B cell (primary cell): ENCODE measurements at regions of chr20 and their contacts with region 1.

Region 1: DNA sequence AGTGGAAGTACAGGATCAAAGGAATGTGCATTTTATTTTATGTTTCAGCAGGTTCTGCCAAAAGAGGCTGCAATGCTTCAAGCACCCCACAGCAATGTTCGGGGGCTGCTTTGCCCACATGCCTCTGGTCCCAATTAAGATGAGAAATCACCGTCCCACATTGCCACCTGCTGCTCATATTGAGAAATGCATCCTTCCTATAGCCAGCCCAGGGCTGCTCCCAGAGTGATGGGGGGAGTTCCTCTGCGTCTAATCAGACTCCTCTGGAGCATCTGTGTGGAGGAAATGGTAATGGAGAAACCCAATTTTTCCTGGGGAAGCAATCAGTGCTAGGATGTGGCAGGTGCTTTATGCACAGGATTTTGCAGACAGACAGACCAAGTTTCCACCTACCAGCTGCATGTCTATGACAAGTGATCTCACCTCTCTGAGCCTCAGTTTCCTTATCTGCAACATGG is 33.7 kb downstream of the PTGIS start:
- DNase-seq: peak; percentile 68
- ATAC-seq: peak; percentile 66
- H3K4me3 ChIP-seq: no peak overlapping the region
- H3K4me3 Mint-ChIP-seq: no peak overlapping the region
- H3K27ac ChIP-seq: no peak overlapping the region
- H3K27ac Mint-ChIP-seq: no peak overlapping the region
- H3K4me1 ChIP-seq: peaks cover 0 to 3% of the 10 kb centered on the region in 2 donors
- H3K4me1 Mint-ChIP-seq: peaks cover 4% of the 10 kb centered on the region
- H3K27me3 ChIP-seq: peaks cover 0 to 8% (median 2%) of the 10 kb centered on the region in 4 experiments
- H3K27me3 Mint-ChIP-seq: peaks cover 18% of the 10 kb centered on the region
- CTCF ChIP-seq: peak; percentile 88

Region 2: DNA sequence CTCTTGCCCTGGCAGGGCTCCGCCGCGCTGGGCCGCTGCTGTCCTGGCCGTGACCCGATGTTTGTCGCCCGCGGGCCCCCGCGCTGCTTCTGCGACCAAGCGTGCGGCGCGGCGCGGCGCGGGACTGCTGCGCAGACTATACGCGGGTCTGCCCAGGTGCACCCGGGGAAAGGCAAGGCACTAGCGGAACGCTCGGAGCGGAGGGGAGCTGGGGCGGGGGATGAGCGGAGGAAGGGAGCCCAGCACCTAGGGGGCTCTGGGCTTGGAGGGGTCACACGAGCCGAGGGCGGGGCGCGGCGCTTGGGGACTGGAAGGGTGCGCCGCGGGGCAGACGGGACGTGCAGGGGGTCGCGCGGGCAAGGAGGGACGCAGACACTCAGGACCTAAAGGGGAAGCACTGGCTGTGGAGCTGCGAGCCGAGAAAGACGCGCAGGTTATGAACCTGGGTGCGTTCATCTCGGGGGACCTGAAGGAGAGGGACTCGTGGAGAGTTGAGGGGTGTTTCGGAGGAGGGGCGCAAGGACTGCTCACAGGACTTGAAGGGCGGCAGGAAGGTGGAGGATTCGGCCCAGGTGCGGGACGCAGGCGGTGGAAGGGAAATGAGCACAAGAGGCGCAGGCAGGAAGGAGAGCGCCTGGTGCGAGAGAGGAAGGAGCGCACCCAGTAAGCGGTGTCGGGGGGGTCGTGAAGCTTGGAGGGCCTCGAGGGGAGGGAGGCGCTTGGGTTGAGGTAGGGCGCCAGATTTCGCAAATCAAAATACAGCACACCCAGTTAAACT is 215.7 kb before region 1 on chr20:
- CTCF ChIA-PET with region 1: no interaction called
- POLR2A ChIA-PET with region 1: no interaction called
- intact Hi-C with region 1: loop called (anchors 5 kb)
- DNase-seq: peak; percentile 41
- ATAC-seq: no peak
- H3K4me3 ChIP-seq: peak overlapping the region in 2 of 5 experiments; percentile 33 to 46
- H3K4me3 Mint-ChIP-seq: peak overlapping the region; percentile 79
- H3K27ac ChIP-seq: no peak overlapping the region
- H3K27ac Mint-ChIP-seq: no peak overlapping the region
- H3K4me1 ChIP-seq: peaks cover 11 to 17% of the 10 kb centered on the region in 2 donors
- H3K4me1 Mint-ChIP-seq: peaks cover 12% of the 10 kb centered on the region
- H3K27me3 ChIP-seq: peaks cover 0 to 56% (median 29%) of the 10 kb centered on the region in 4 experiments
- H3K27me3 Mint-ChIP-seq: peaks cover 44% of the 10 kb centered on the region
- CTCF ChIP-seq: no peak